HEK293 (cell line): ENCODE measurements at regions of chr1 and their contacts with region 1.

Region 1: DNA sequence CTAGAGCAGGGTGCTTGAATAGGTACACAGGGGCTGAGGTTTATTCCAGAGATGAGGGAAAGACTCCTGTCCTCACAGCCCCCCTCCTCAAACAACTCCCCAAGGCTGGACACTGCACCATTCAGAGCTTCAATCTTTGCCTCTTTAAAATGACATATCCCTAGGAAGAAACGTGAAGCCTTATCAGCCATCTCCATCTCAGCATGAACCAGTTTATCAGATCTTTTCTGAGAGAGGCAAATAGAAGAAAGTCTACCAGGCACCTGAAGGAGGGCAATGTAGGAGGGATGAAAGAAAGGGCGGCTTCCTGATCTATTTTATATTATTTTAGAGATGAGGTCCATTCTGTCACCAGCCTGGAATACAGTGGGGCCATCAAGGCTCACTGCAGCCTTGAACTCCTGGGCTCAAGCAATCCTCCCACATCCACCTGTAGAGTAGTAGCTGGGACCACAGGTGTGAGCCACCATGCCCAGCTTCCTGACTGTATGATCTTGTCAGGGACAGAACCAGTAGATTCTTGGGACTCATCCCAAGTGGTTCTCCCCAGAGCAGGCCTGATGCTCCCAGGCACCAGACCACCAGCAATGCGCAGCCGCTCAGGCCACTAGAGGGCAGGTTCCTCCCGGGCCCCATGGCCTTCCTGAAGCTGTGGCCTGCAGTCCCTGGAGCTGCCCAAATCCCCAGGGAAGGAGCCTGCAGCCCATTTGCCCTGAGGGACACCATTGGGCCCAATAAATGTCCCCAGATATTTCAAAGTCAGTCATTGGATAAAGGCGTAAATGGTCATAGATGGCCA is 44.4 kb upstream of the GOLT1A start:
- H3K4me3 ChIP-seq: no peak overlapping the region
- H3K27ac ChIP-seq: no peak overlapping the region
- H3K4me1 ChIP-seq: peaks cover 8% of the 10 kb centered on the region; the same call in 1 of the 2 replicates
- CTCF ChIP-seq: peak; percentile 73

Region 2: GRCh38 chr1:204162231-204163074 is 95.7 kb before region 1 on chr1:
- CTCF ChIA-PET with region 1: interaction called, 15 read pairs
- POLR2A ChIA-PET with region 1: no interaction called
- H3K4me3 ChIP-seq: no peak overlapping the region
- H3K27ac ChIP-seq: no peak overlapping the region
- H3K4me1 ChIP-seq: no peaks in the 10 kb centered on the region
- CTCF ChIP-seq: peak; percentile 95

Region 3: GRCh38 chr1:204307334-204307883 is 49.3 kb after region 1 on chr1:
- CTCF ChIA-PET with region 1: interaction called, 10 read pairs
- POLR2A ChIA-PET with region 1: no interaction called
- H3K4me3 ChIP-seq: no peak overlapping the region
- H3K27ac ChIP-seq: no peak overlapping the region
- H3K4me1 ChIP-seq: peaks cover 4% of the 10 kb centered on the region; the same call in 1 of the 2 replicates
- CTCF ChIP-seq: peak; percentile 48

Region 4: DNA sequence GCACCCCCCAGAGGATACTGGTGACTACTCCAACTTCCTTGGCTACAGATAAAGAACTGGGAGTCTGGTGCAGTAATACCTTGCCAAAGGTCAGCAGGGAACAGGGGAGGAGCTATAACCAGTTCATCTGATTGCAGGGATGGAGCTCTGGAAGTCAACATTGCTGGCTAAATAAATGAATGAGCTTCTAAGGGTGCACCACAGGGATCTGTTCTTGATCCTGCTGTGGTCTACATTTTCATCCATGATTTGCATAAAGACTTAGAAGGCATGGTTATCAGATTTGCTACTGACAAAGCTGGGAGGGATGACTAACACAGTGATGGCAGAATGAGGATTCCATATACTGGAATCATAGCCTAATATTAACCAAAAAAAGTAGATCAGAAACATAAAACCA is 83.2 kb after region 1 on chr1:
- CTCF ChIA-PET with region 1: interaction called, 13 read pairs
- POLR2A ChIA-PET with region 1: no interaction called
- H3K4me3 ChIP-seq: no peak overlapping the region
- H3K27ac ChIP-seq: no peak overlapping the region
- H3K4me1 ChIP-seq: peaks cover 2% of the 10 kb centered on the region; the same call in 1 of the 2 replicates
- CTCF ChIP-seq: no peak

Region 5: GRCh38 chr1:204368996-204369726 is 111.0 kb after region 1 on chr1:
- CTCF ChIA-PET with region 1: interaction called, 164 read pairs
- POLR2A ChIA-PET with region 1: no interaction called
- H3K4me3 ChIP-seq: no peak overlapping the region
- H3K27ac ChIP-seq: no peak overlapping the region
- H3K4me1 ChIP-seq: no peaks in the 10 kb centered on the region
- CTCF ChIP-seq: no peak